ENCODE measurements at regions of chr14 and their contacts with region 1.

Region 1: DNA sequence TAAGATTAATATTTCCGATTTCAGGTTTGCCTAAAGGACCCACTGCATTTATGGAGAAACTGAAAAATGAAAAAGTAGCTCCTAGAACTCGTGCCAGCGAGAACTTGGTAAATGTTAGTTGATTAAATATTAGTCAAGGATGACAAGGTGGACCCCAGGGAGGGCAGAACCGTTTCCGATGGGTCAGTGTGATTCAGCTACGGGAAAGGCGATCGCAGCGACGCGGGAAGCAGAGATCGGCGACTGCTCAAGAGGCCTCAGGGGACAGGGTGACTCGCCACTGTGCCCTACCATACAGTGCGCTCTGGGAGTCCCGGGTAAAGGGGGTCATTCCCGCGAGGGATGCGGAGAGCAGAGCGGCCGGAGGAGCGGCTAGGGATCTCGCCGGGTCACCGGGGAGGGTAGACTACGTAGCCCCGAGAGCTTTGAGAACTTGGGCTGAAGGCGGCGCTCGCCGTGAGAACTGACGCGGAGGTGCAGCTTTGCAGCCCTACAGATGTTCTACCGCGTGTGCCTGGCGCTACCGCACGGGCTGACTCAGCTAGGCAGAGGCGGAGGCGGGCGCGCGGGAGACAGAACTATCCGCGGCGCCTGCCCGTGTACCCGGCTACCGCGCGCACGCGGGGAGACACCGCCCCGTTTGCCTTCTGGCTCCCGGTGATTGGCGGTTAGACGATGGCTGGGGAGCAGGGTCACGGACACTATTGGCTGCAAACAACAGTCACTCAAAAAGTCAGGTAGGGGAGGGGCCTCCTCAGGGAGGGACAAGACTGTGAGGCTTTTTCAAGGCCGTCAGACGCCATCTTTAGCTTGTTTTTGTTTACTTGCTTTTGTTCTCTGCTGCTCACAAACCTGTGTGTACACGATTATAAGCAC is 3.2 kb downstream of the C14orf93 start:
- DNase-seq: peak; percentile 94
- ATAC-seq: peak; percentile 98
- H3K4me3 Mint-ChIP-seq: peak overlapping the region; percentile 95
- H3K27ac Mint-ChIP-seq: peak overlapping the region; percentile 96
- H3K4me1 Mint-ChIP-seq: peaks cover 34% of the 10 kb centered on the region
- H3K27me3 Mint-ChIP-seq: no peaks in the 10 kb centered on the region

Region 2: DNA sequence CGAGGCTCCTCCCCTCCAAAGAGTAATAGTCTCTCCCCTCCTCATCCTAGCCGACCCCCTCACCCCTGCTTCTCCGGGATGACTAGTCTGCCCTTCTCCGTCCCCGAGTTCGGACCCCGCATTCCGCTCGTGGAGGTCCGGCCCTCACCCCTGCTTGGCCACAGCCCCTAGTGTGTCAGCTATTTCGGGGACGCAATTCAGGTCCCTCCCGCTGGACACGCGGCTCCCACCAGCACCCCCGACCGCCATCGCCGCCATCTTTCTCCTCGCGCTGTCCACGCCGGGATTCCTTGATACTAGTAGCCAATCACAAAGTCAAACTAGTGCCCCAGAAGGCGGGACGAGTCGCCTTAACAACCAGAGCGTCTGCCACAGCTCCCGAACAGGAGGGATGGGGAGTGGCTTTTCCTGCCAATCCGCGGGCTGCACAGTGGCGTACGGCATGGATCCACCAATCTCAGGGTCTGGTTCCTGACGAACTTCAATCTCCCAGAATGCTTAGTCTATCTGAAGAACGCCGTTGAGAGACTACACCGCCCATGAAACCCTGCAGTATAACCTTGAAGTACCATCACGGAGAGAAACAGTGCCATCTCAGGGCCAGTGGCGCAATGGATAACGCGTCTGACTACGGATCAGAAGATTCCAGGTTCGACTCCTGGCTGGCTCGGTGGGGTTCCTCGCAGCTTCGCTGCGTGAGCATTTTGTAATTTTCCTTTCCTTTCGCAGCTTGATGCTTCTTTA is 77.5 kb before region 1 on chr14 and contains the start of gene PRMT5:
- POLR2A ChIA-PET with region 1: interaction called, 10 read pairs
- DNase-seq: peak; percentile 88
- ATAC-seq: peak; percentile 98
- H3K4me3 Mint-ChIP-seq: no peak within 1 kb of the TSS
- H3K27ac Mint-ChIP-seq: no peak within 1 kb of the TSS
- H3K4me1 Mint-ChIP-seq: peaks cover 25% of the 10 kb centered on the region
- H3K27me3 Mint-ChIP-seq: no peaks in the 10 kb centered on the region
- total RNA-seq, gene PRMT5: 35.7 to 40.1 TPM

Region 3: GRCh38 chr14:22994762-22995275 is 12.0 kb before region 1 on chr14:
- POLR2A ChIA-PET with region 1: interaction called, 17 read pairs
- DNase-seq: no peak
- ATAC-seq: peak; percentile 88
- H3K4me3 Mint-ChIP-seq: no peak overlapping the region
- H3K27ac Mint-ChIP-seq: no peak overlapping the region
- H3K4me1 Mint-ChIP-seq: peaks cover 3% of the 10 kb centered on the region
- H3K27me3 Mint-ChIP-seq: no peaks in the 10 kb centered on the region

Region 4: DNA sequence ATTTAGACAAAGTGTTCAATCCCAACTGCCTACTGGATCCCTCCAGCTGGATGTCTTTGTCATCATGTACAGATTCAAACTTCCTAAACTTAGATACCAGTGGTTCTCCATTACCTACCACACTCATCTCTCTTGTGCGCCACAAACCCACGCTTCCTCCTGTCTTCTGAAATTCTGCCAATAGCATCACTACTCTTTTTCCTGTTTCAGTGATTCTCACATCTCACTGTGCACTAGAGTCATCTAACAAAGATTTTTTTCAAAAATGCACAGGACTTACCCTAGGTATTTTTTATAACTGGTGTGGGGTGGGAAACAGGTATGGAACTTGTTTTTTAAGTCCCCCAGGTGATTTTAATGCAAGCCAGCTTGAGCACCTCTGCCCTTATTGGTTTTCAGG is 22.0 kb after region 1 on chr14:
- POLR2A ChIA-PET with region 1: interaction called, 18 read pairs
- DNase-seq: no peak
- ATAC-seq: peak; percentile 85
- H3K4me3 Mint-ChIP-seq: peak overlapping the region; percentile 10
- H3K27ac Mint-ChIP-seq: peak overlapping the region; percentile 46
- H3K4me1 Mint-ChIP-seq: peaks cover 25% of the 10 kb centered on the region
- H3K27me3 Mint-ChIP-seq: no peaks in the 10 kb centered on the region

Region 5: GRCh38 chr14:23120541-23121251 is 113.9 kb after region 1 on chr14:
- POLR2A ChIA-PET with region 1: no interaction called
- DNase-seq: peak; percentile 82
- ATAC-seq: peak; percentile 53
- H3K4me3 Mint-ChIP-seq: peak overlapping the region; percentile 65
- H3K27ac Mint-ChIP-seq: peak overlapping the region; percentile 96
- H3K4me1 Mint-ChIP-seq: peaks cover 28% of the 10 kb centered on the region
- H3K27me3 Mint-ChIP-seq: no peaks in the 10 kb centered on the region

Region 6: DNA sequence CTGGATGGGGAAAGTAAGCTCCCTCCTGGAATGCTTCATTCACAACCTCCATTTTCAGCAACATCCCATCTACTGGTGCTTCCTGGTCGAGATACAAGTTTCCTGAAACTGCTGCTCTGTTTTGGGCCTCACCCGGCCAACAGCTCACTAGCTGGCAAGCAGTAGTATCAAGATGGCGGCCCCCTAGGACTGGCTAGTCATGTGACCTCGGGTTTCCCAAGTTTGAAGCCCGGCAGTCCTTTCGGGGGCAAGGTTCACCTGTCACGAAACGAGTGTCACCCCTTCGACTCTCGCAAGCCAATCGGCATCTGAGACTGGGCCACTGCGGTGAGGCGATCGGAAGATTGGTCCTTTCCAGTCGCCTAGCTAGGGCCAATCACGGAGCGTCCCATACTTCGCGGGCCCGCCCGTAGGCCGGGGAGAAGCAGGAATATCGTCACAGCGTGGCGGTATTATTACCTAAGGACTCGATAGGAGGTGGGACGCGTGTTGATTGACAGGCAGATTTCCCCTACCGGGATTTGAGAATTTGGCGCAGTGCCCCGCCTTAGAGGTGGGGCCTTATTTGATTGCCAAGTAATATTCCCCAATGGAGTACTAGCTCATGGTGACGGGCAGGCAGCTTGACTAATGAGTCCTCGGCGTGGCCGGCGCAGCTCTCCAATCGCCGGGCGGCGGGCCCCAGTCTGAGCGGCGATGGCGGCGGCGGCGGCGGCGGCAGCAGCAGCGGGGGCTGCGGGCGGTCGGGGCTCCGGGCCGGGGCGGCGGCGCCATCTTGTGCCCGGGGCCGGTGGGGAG is 314.2 kb after region 1 on chr14 and contains the start of gene PABPN1:
- POLR2A ChIA-PET with region 1: interaction called, 10 read pairs
- DNase-seq: peak; percentile 93
- ATAC-seq: peak; percentile 92
- H3K4me3 Mint-ChIP-seq: peak within 1 kb of the TSS; percentile 94
- H3K27ac Mint-ChIP-seq: peak within 1 kb of the TSS; percentile 98
- H3K4me1 Mint-ChIP-seq: peaks cover 27% of the 10 kb centered on the region
- H3K27me3 Mint-ChIP-seq: no peaks in the 10 kb centered on the region
- total RNA-seq, gene PABPN1: 207 to 208 TPM

Measured in activated naive CD8-positive, alpha-beta T cell treated with anti-CD3 and anti-CD28 coated beads, Interleukin-2, amount 10 ng/mL, durations not matched to agents 7 days and 5 days (primary cell).